Thyroid gland (tissue), 4 donors: ENCODE measurements at regions of chr13 and their contacts with region 1.

Region 1: DNA sequence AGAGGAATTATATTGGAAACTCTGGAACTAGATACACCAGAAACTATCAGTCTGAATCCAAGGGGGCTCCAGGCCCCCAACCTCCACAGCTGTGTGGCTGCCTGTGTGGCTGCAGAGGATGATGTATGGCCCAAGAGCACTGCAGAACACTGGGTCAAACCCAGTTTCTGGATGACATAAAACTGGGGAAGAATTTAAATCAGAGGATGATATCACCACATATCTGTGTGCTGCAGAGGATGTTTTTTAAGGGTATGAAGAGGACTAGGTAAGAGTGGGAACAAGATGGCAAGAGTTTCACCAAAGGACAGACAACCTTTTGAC is 226.4 kb downstream of the SUCLA2 start:
- DNase-seq: no peak
- H3K4me3 ChIP-seq: no peak overlapping the region
- H3K27ac ChIP-seq: no peak overlapping the region
- H3K4me1 ChIP-seq: no peaks in the 10 kb centered on the region
- H3K27me3 ChIP-seq: no peaks in the 10 kb centered on the region
- CTCF ChIP-seq: no peak
- POLR2A ChIP-seq: no peak

Region 2: DNA sequence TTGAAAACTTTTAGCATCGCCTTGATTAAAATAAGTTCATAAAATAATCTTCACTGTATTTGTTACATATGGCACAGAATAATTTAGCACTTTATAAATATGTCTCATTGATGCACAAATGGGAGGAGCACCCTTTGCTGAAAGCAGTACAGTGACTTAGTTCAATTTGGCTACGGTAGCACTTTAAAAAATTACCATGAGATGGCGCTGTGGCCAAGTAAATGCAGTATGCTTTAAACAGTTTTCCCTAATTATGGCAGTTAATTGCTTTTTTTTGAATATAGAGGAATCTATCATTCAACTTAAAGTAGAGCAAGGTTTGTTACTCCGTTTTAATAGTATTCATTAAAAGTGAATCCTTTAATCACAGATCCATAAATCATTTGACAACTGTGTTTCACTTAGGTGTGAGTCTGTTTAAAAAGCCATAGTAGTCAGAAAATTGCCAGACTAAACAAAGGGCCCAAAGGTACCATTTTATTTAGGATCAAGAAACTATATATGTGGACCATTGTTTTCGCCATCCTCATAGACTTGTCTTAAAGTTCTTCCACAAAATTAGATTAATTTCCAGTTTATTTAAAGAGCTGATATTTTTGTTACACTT is 942.9 kb before region 1 on chr13:
- intact Hi-C with region 1: loop called (anchors 5 kb)
- DNase-seq: peak; percentile 31 to 33
- H3K4me3 ChIP-seq: no peak overlapping the region
- H3K27ac ChIP-seq: no peak overlapping the region
- H3K4me1 ChIP-seq: no peaks in the 10 kb centered on the region
- H3K27me3 ChIP-seq: no peaks in the 10 kb centered on the region
- CTCF ChIP-seq: peak; percentile 22 to 87 (median 62)
- POLR2A ChIP-seq: no peak

Region 3: GRCh38 chr13:46975173-46975572 is 799.5 kb before region 1 on chr13:
- intact Hi-C with region 1: loop called (anchors 10 kb)
- DNase-seq: no peak
- H3K4me3 ChIP-seq: no peak overlapping the region
- H3K27ac ChIP-seq: no peak overlapping the region
- H3K4me1 ChIP-seq: no peaks in the 10 kb centered on the region
- H3K27me3 ChIP-seq: no peaks in the 10 kb centered on the region
- CTCF ChIP-seq: no peak
- POLR2A ChIP-seq: no peak

Region 4: DNA sequence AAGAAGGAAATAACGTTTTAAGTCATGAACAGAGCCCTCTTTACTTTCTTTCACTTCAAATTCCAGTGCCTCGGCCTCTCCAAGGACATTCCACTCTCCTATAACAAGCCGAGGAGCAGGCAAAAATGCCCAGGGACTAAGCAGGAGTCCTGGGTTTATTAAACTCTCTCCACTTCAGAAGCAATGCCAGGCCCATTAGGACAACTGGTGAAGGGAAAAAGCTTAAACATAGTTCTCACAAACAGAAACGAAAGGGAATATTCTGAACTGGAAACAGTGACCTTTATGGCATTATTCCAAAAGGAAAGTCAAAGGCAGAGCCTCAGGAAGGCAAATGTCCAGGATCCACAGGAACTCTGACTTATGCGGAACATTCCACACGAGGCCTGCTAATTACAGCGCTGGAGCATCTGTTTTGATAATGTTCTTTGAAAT is 351.2 kb after region 1 on chr13:
- intact Hi-C with region 1: no loop called
- DNase-seq: peak; percentile 22 to 42
- H3K4me3 ChIP-seq: no peak overlapping the region
- H3K27ac ChIP-seq: peak overlapping the region; percentile 16 to 80 (median 76)
- H3K4me1 ChIP-seq: peaks cover 22 to 50% of the 10 kb centered on the region in 2 donors
- H3K27me3 ChIP-seq: no peaks in the 10 kb centered on the region
- CTCF ChIP-seq: no peak
- POLR2A ChIP-seq: peak in 1 of 2 donors; percentile 15